Ovary (tissue), 10 donors: ENCODE measurements at regions of chr1 and their contacts with region 1.

Region 1: GRCh38 chr1:45490626-45491486 is at the start of gene TESK2:
- DNase-seq: peak; percentile 95 to 98 (median 98)
- H3K4me3 ChIP-seq: peak within 1 kb of the TSS; percentile 97
- H3K27ac ChIP-seq: peak within 1 kb of the TSS; percentile 34 to 88
- H3K4me1 ChIP-seq: no peaks in the 10 kb centered on the region
- H3K27me3 ChIP-seq: no peaks in the 10 kb centered on the region
- CTCF ChIP-seq: peak in 2 of 3 donors; percentile 32 to 58
- EP300 ChIP-seq: no peak
- POLR2A ChIP-seq: peak; percentile 76
- total RNA-seq, gene TESK2: 6.7 to 12.5 (median 9.7) TPM

Region 2: GRCh38 chr1:45018599-45019230 is 472.1 kb before region 1 on chr1:
- intact Hi-C with region 1: loop called in 3 of 4 experiments (anchors 5 to 10 kb)
- DNase-seq: peak in 3 of 5 donors; percentile 42 to 60 (median 44)
- H3K4me3 ChIP-seq: no peak overlapping the region
- H3K27ac ChIP-seq: no peak overlapping the region
- H3K4me1 ChIP-seq: peaks cover 2% of the 10 kb centered on the region
- H3K27me3 ChIP-seq: no peaks in the 10 kb centered on the region
- CTCF ChIP-seq: peak in 2 of 3 donors; percentile 25 to 37
- EP300 ChIP-seq: no peak
- POLR2A ChIP-seq: no peak

Region 3: GRCh38 chr1:45414746-45415145 is 76.1 kb before region 1 on chr1:
- intact Hi-C with region 1: no loop called
- DNase-seq: no peak
- H3K4me3 ChIP-seq: no peak overlapping the region
- H3K27ac ChIP-seq: no peak overlapping the region
- H3K4me1 ChIP-seq: no peaks in the 10 kb centered on the region
- H3K27me3 ChIP-seq: no peaks in the 10 kb centered on the region
- CTCF ChIP-seq: no peak
- EP300 ChIP-seq: no peak
- POLR2A ChIP-seq: no peak

Region 4: DNA sequence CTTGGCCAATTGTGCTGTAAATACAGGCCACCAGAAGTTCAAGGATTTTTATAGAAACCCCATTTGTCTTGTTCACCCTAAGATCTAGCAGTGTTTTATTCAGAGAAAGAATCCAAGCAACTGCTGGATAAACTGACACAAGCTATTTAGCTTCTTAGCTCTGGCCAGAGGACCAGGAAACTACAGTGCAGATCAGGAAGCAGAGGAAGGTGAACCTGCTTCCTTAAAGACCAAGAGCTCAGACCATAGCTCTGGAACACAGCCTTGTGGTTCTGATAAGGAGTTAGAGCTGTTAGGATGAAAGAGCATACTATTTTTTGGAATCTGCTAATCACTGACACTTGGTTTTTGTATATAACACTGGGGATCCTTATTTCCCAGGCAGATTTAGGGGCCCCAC is 138.2 kb after region 1 on chr1:
- intact Hi-C with region 1: no loop called
- DNase-seq: no peak
- H3K4me3 ChIP-seq: no peak overlapping the region
- H3K27ac ChIP-seq: no peak overlapping the region
- H3K4me1 ChIP-seq: no peaks in the 10 kb centered on the region
- H3K27me3 ChIP-seq: no peaks in the 10 kb centered on the region
- CTCF ChIP-seq: no peak
- EP300 ChIP-seq: no peak
- POLR2A ChIP-seq: no peak

Region 5: DNA sequence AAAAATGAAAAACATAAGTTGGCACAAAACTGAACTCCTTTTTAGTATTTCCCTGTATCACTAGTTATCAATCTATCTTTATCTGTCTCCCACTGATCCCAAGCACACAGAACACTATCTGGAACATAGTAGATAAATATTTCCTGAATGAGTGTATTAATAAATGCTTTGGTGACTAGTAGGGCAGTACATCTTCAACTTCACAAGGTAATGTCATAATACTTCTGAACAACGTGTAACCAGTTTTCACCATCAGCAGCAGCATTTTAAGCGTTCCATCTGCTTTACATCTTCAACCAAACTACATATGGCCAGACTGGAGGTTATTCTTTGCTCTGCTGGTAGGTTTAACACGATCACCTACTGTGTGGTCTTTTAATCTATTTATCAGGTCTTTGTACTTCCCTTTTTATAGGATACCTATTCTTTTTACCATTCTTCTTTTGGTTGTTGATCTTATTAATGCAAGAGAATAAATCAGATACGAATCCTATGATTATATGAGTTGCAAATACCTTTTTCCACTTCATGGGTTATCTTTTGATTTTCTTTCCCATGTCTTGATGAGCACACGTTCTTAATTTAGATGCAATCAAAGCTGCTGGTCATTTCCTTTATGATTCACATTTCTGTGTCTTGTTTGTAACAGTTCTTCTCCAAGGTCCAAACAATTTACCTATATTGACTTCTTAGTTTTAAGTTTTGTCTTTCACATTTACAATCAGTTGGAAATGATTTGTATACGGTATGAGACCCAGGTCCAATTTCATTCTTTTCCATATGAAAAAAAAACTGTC is 179.2 kb after region 1 on chr1:
- intact Hi-C with region 1: no loop called
- DNase-seq: no peak
- H3K4me3 ChIP-seq: no peak overlapping the region
- H3K27ac ChIP-seq: no peak overlapping the region
- H3K4me1 ChIP-seq: peaks cover 9% of the 10 kb centered on the region
- H3K27me3 ChIP-seq: no peaks in the 10 kb centered on the region
- CTCF ChIP-seq: no peak
- EP300 ChIP-seq: no peak
- POLR2A ChIP-seq: no peak

Region 6: DNA sequence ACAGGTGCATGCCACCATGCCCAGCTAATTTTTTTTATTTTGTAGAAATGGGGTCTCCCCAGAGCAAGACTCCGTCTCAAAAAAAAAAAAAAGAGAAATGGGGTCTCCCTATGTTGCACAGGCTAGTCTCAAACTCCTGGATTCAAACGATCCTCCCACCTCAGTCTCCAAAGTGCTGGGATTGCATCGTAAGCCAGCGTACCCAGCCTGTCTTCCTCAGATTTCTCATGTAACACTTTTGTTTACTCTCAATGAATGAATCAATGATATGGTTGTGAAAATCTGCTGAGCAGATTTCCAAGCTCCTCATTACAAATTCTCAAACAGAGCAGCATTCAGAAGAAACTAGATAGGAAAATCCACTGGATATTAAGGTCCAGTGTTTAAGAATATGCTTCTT is 1849.4 kb after region 1 on chr1:
- intact Hi-C with region 1: no loop called
- DNase-seq: no peak
- H3K4me3 ChIP-seq: no peak overlapping the region
- H3K27ac ChIP-seq: no peak overlapping the region
- H3K4me1 ChIP-seq: peaks cover 2% of the 10 kb centered on the region
- H3K27me3 ChIP-seq: no peaks in the 10 kb centered on the region
- CTCF ChIP-seq: no peak
- EP300 ChIP-seq: no peak
- POLR2A ChIP-seq: no peak